ENCODE measurements at regions of chr9 and their contacts with region 1.

Region 1: DNA sequence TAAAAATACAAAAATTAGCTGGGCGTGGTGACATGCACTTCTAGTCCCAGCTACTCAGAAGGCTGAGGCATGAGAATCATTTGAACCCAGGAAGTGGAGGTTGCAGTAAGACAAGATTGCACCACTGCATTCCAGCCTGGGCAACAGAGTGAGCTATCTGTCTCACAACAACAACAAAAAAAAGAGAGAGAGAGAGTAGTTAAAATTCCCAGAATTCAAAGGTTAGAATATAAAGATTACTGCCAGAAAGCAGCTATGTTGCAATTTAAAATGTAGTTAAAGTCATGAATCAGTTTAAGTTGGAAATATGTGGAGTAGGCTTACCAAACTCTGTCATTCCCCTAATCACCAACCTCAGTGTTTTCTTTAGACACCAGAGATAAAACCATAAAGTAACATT is 58.7 kb upstream of the SUSD1 start:
- DNase-seq: no peak
- ATAC-seq: no peak
- H3K4me3 ChIP-seq: no peak overlapping the region
- H3K4me3 Mint-ChIP-seq: no peak overlapping the region
- H3K27ac ChIP-seq: no peak overlapping the region
- H3K27ac Mint-ChIP-seq: no peak overlapping the region
- H3K4me1 ChIP-seq: no peaks in the 10 kb centered on the region
- H3K4me1 Mint-ChIP-seq: peaks cover 6 to 20% (median 10%) of the 10 kb centered on the region in 3 donors
- H3K27me3 ChIP-seq: no peaks in the 10 kb centered on the region
- H3K27me3 Mint-ChIP-seq: no peaks in the 10 kb centered on the region

Region 2: DNA sequence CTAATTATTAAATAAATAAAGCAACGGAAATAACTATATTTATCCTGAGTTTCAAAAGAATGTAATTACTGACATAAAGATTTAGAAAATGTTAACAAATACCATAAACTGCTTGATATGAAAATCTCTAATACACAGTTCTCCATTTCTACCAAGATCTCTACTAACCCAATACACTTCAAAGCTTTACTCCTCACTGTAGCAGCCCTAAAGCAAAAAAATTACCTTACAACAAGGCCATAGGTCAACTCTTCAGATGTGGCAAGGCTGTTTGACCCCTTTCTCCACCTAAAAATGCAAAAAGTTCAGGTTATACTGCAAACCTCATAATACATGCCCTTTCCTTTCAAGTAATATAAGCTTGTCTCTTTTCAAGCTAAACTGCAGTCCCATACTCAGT is 240.4 kb before region 1 on chr9:
- CTCF ChIA-PET with region 1: interaction called in 1 of 2 experiments, 11 read pairs
- POLR2A ChIA-PET with region 1: no interaction called
- DNase-seq: no peak
- ATAC-seq: no peak
- H3K4me3 ChIP-seq: no peak overlapping the region
- H3K4me3 Mint-ChIP-seq: no peak overlapping the region
- H3K27ac ChIP-seq: no peak overlapping the region
- H3K27ac Mint-ChIP-seq: no peak overlapping the region
- H3K4me1 ChIP-seq: peaks cover 6 to 13% of the 10 kb centered on the region in 2 experiments
- H3K4me1 Mint-ChIP-seq: peaks cover 16 to 23% (median 21%) of the 10 kb centered on the region in 3 donors
- H3K27me3 ChIP-seq: no peaks in the 10 kb centered on the region
- H3K27me3 Mint-ChIP-seq: no peaks in the 10 kb centered on the region

Measured in T-cell (primary cell).